H1 (cell line): ENCODE measurements at regions of chr4 and their contacts with region 1.

Region 1: GRCh38 chr4:1777822-1778641 is 15.1 kb upstream of the FGFR3 start:
- DNase-seq: peak; percentile 56 to 78
- H3K4me3 ChIP-seq: peak overlapping the region in 1 of 4 experiments; percentile 41; a peak in 2 of 8 replicates
- H3K27ac ChIP-seq: peak overlapping the region; percentile 60; the same call in 1 of the 2 replicates
- H3K4me1 ChIP-seq: peaks cover 0 to 27% (median 22%) of the 10 kb centered on the region in 4 experiments; a peak in 6 of 7 replicates
- H3K27me3 ChIP-seq: no peaks in the 10 kb centered on the region
- CTCF ChIP-seq: peak in 1 of 3 experiments; percentile 10; a peak in 1 of 4 replicates
- EP300 ChIP-seq: peak in 1 of 2 experiments; percentile 70; a peak in 1 of 3 replicates
- POLR2A ChIP-seq: no peak
- RAD21 ChIP-seq: no peak; a peak in 1 of 4 replicates

Region 2: GRCh38 chr4:1767770-1768366 is 10.2 kb before region 1 on chr4:
- CTCF ChIA-PET with region 1: interaction called, 2,507 read pairs
- POLR2A ChIA-PET with region 1: interaction called, 12 read pairs
- DNase-seq: peak; percentile 43 to 84
- H3K4me3 ChIP-seq: peak overlapping the region; percentile 10 to 49 (median 26); a peak in 7 of 8 replicates
- H3K27ac ChIP-seq: no peak overlapping the region
- H3K4me1 ChIP-seq: peaks cover 5 to 44% (median 31%) of the 10 kb centered on the region in 4 experiments
- H3K27me3 ChIP-seq: peaks cover 0 to 5% (median 0%) of the 10 kb centered on the region in 4 experiments; a peak in 2 of 7 replicates
- CTCF ChIP-seq: peak in 2 of 3 experiments; percentile 45 to 51; a peak in 3 of 4 replicates
- EP300 ChIP-seq: no peak
- POLR2A ChIP-seq: no peak
- RAD21 ChIP-seq: peak; percentile 19 to 45; a peak in 3 of 4 replicates

Region 3: DNA sequence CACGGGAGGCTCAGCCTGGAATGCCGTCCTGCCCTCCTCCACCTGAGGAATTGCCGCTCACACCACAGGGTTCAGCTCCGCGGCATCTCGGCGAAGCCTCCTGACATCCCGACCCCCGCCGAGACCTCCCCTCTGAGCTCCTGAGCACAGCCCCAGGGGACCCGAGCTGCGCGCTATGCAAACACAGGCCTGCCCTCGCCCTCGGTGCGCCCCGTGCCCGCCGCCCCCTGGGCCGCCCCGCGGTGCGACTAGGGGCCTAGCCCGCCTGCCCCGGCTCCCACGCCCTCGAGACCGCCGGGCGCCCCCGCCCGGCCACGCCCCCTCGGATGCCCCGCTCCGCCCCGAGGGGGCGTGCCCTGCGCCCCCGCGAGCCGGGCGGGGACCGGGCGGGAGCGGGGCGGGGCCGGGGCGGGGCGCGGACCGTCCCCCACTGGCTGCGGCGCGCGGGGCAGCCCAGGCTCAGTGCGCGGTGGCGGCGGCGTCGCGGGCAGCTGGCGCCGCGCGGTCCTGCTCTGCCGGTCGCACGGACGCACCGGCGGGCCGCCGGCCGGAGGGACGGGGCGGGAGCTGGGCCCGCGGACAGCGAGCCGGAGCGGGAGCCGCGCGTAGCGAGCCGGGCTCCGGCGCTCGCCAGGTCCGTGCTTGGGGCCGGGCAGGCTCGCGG is 14.9 kb after region 1 on chr4 and contains the start of gene FGFR3:
- CTCF ChIA-PET with region 1: interaction called, 2,507 read pairs
- POLR2A ChIA-PET with region 1: interaction called, 170 read pairs
- DNase-seq: peak; percentile 47 to 83
- H3K4me3 ChIP-seq: peak within 1 kb of the TSS; percentile 55 to 71 (median 64)
- H3K27ac ChIP-seq: no peak within 1 kb of the TSS
- H3K4me1 ChIP-seq: peaks cover 0 to 19% (median 9%) of the 10 kb centered on the region in 4 experiments; a peak in 6 of 7 replicates
- H3K27me3 ChIP-seq: peaks cover 5 to 44% (median 36%) of the 10 kb centered on the region in 4 experiments
- CTCF ChIP-seq: no peak
- EP300 ChIP-seq: no peak
- POLR2A ChIP-seq: peak in 1 of 2 experiments; percentile 46; a peak in 2 of 3 replicates
- RAD21 ChIP-seq: no peak
- total RNA-seq, gene FGFR3: 19.5 TPM in 2 replicates